ENCODE measurements at regions of chr14 and their contacts with region 1.

Region 1: DNA sequence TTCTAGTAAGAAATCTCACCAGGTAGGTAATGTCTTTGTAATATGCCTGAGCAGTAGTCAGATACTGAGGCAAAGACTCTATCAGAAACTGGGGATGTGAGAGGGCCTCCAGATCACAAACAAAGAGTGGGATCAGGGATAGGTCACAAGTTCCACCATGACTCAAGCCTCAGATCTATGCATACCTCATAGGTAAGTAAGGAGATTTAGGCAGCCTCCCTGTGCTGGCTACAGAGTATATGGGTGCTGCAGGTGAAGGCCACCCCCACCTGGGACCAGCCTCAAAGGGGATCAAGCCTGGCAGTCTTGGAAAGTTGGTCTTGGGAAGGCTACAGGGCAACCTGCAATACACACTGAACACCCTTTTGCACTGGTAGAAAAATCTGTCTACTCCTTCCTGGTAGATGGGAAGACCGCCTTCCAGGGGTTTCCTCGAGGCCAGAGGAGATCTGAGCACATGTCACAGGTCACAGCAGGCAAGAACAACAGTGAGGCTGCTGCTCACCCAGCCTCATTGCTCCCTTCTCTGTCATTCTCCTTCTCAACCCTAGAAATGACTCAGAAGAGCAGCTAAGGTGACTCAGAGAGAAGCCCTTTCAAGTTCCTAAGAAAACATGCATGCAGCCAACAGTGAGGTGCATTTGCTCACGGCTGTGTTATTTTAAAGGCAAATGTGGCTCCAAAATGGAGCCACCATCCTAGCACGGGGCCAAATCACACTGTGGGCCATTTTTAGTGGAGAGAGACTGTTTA is 143.4 kb upstream of the CDKN3 start:
- DNase-seq: peak; percentile 89
- H3K4me3 ChIP-seq: no peak overlapping the region
- H3K27ac ChIP-seq: peak overlapping the region; percentile 93
- H3K4me1 ChIP-seq: peaks cover 33% of the 10 kb centered on the region
- H3K27me3 ChIP-seq: no peaks in the 10 kb centered on the region
- CTCF ChIP-seq: no peak

Region 2: DNA sequence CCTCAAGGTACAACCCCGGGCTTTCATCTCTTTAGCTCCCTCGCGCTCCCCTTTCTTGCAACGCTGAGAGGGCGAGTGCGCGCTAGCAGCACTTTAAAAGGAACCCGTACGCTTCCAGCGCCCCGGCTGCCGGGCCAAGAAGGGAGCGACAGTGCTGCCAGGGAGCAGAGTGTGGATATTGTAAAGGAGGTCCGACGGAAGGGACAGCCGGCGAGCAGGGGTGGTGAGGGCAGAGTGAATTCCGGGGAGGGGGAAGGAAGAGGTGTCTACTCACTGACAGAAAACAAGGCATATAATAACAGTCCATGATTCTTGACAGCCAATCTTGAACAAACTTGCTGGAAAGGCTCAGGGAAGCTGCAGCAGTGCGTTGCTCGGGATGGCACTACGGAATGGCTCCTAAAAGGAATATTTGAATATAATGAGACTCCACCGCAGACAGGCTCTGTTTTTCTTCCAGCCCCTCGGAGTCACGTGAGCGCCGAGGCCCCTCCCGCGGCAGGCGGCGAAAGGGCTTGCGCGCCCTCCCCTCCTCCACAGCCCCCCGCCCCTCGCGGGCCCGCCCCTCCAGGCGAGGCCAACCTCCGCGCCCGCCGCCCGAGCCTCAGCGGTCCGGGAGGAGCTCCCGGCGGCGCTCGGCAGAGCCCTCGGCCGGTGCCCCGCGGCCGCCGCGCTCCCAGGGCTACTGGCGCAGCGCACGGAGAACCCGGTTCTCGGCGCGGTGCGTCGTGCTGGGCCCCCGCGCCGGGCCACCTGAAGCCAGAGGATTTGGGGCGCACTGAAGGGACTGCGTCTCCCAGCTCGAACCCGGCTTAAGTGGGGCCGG is 300.2 kb before region 1 on chr14:
- CTCF ChIA-PET with region 1: no interaction called
- dilution Hi-C with region 1: no loop called
- in situ Hi-C with region 1: no loop called
- intact Hi-C with region 1: loop called (anchors 10 kb)
- DNase-seq: peak; percentile 59
- H3K4me3 ChIP-seq: peak overlapping the region; percentile 48 to 67 (median 59)
- H3K27ac ChIP-seq: peak overlapping the region; percentile 56
- H3K4me1 ChIP-seq: peaks cover 17% of the 10 kb centered on the region
- H3K27me3 ChIP-seq: no peaks in the 10 kb centered on the region
- CTCF ChIP-seq: no peak

Region 3: GRCh38 chr14:54108481-54109471 is 144.6 kb before region 1 on chr14:
- CTCF ChIA-PET with region 1: interaction called, 4 read pairs
- dilution Hi-C with region 1: no loop called
- in situ Hi-C with region 1: no loop called
- intact Hi-C with region 1: loop called (anchors 2 kb)
- DNase-seq: peak; percentile 75
- H3K4me3 ChIP-seq: no peak overlapping the region
- H3K27ac ChIP-seq: peak overlapping the region; percentile 92
- H3K4me1 ChIP-seq: peaks cover 67% of the 10 kb centered on the region
- H3K27me3 ChIP-seq: no peaks in the 10 kb centered on the region
- CTCF ChIP-seq: no peak

Region 4: GRCh38 chr14:54133896-54134295 is 119.5 kb before region 1 on chr14:
- CTCF ChIA-PET with region 1: no interaction called
- dilution Hi-C with region 1: no loop called
- in situ Hi-C with region 1: no loop called
- intact Hi-C with region 1: no loop called
- DNase-seq: peak; percentile 82
- H3K4me3 ChIP-seq: no peak overlapping the region
- H3K27ac ChIP-seq: no peak overlapping the region
- H3K4me1 ChIP-seq: peaks cover 4% of the 10 kb centered on the region
- H3K27me3 ChIP-seq: no peaks in the 10 kb centered on the region
- CTCF ChIP-seq: no peak

Region 5: GRCh38 chr14:54189748-54190354 is 63.5 kb before region 1 on chr14:
- CTCF ChIA-PET with region 1: no interaction called
- dilution Hi-C with region 1: no loop called
- in situ Hi-C with region 1: no loop called
- intact Hi-C with region 1: loop called (anchors 2 kb)
- DNase-seq: peak; percentile 92
- H3K4me3 ChIP-seq: no peak overlapping the region
- H3K27ac ChIP-seq: peak overlapping the region; percentile 93
- H3K4me1 ChIP-seq: peaks cover 25% of the 10 kb centered on the region
- H3K27me3 ChIP-seq: no peaks in the 10 kb centered on the region
- CTCF ChIP-seq: no peak

Region 6: GRCh38 chr14:54211551-54212308 is 41.6 kb before region 1 on chr14:
- CTCF ChIA-PET with region 1: no interaction called
- dilution Hi-C with region 1: no loop called
- in situ Hi-C with region 1: no loop called
- intact Hi-C with region 1: loop called (anchors 1 kb)
- DNase-seq: peak; percentile 79
- H3K4me3 ChIP-seq: peak overlapping the region in 2 of 3 experiments; percentile 2 to 22
- H3K27ac ChIP-seq: peak overlapping the region; percentile 99
- H3K4me1 ChIP-seq: peaks cover 58% of the 10 kb centered on the region
- H3K27me3 ChIP-seq: no peaks in the 10 kb centered on the region
- CTCF ChIP-seq: no peak

Region 7: DNA sequence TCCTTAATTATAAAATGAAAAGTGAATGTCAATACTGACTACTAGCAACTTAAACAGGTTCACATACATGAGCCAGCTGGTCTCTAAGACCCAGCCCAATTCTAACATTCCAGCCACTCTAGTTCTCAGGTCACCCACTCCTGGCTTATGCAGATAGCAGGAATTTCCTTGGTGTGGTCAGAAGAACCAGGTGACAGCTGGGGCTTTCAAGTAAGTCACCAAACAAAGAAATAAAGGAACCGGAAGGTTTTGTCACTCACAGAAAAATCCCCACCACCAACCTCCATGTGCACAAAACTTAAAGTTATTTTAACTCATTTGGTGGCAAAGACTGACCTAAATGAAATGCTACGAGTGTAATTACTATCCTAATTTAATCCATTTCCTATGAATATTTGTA is 13.8 kb after region 1 on chr14:
- CTCF ChIA-PET with region 1: no interaction called
- dilution Hi-C with region 1: no loop called
- in situ Hi-C with region 1: no loop called
- intact Hi-C with region 1: no loop called
- DNase-seq: no peak
- H3K4me3 ChIP-seq: no peak overlapping the region
- H3K27ac ChIP-seq: no peak overlapping the region
- H3K4me1 ChIP-seq: no peaks in the 10 kb centered on the region
- H3K27me3 ChIP-seq: no peaks in the 10 kb centered on the region
- CTCF ChIP-seq: no peak

Region 8: GRCh38 chr14:54312140-54312801 is 58.9 kb after region 1 on chr14:
- CTCF ChIA-PET with region 1: no interaction called
- dilution Hi-C with region 1: no loop called
- in situ Hi-C with region 1: no loop called
- intact Hi-C with region 1: loop called (anchors 1 kb)
- DNase-seq: peak; percentile 99
- H3K4me3 ChIP-seq: peak overlapping the region in 1 of 3 experiments; percentile 14
- H3K27ac ChIP-seq: peak overlapping the region; percentile 78
- H3K4me1 ChIP-seq: peaks cover 34% of the 10 kb centered on the region
- H3K27me3 ChIP-seq: no peaks in the 10 kb centered on the region
- CTCF ChIP-seq: no peak